ENCODE measurements at regions of chr1 and their contacts with region 1.

Region 1: GRCh38 chr1:179002552-179003345 is 22.9 kb upstream of the FAM20B start:
- DNase-seq: peak; percentile 65
- H3K4me3 ChIP-seq: peak overlapping the region; percentile 26
- H3K27ac ChIP-seq: no peak overlapping the region
- H3K27me3 ChIP-seq: no peaks in the 10 kb centered on the region
- CTCF ChIP-seq: peak; percentile 98

Region 2: GRCh38 chr1:178542560-178543356 is 460.0 kb before region 1 on chr1:
- in situ Hi-C with region 1: loop called (anchors 25 kb)
- DNase-seq: peak; percentile 81
- H3K4me3 ChIP-seq: peak overlapping the region; percentile 82
- H3K27ac ChIP-seq: no peak overlapping the region
- H3K27me3 ChIP-seq: no peaks in the 10 kb centered on the region
- CTCF ChIP-seq: peak; percentile 84

Region 3: DNA sequence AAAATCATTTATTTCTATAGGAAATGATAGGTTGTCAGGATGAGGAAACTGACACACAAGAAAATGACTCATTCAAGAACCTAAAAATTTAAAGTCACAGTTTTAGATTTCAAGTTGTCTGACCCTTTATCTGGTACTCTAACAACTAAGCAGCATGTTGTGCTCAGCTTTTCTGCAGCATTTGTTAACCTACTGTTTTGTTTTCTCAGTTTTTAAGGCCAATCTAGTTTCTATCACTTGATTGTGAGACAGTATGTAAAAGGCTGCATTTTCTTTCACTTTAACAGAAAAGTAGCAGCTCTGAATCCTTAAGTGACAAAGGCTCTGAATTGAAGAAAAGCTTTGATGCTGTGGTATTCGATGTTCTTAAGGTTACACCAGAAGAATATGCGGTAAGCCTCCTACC is 218.6 kb before region 1 on chr1:
- in situ Hi-C with region 1: loop called (anchors 25 kb)
- DNase-seq: no peak
- H3K4me3 ChIP-seq: no peak overlapping the region
- H3K27ac ChIP-seq: no peak overlapping the region
- H3K27me3 ChIP-seq: no peaks in the 10 kb centered on the region
- CTCF ChIP-seq: no peak

Measured in brain microvascular endothelial cell (primary cell).